ENCODE measurements at regions of chr14 and their contacts with region 1.

Region 1: DNA sequence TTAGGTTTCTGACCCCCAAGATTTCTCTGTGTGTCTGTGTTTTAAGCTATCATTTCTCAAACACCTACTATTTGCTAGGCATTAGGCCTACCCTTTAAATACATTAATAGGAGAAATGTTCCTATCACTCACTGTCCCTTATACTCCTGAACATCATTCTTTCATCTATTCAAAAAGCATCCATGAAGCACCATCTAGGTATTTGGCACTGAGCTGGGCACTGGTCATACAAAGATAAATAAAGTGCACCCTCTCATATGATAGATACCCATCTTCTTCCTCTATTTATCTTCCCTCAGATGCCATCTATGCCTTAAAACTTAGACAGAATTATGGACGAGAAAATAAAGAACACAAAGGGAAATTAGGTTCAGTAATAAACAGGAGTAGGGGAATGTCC is 20.4 kb downstream of the SIX1 start:
- DNase-seq: no peak
- H3K4me3 ChIP-seq: no peak overlapping the region
- H3K27ac ChIP-seq: no peak overlapping the region
- H3K4me1 ChIP-seq: peaks cover 14% of the 10 kb centered on the region
- H3K27me3 ChIP-seq: no peaks in the 10 kb centered on the region
- CTCF ChIP-seq: no peak

Region 2: DNA sequence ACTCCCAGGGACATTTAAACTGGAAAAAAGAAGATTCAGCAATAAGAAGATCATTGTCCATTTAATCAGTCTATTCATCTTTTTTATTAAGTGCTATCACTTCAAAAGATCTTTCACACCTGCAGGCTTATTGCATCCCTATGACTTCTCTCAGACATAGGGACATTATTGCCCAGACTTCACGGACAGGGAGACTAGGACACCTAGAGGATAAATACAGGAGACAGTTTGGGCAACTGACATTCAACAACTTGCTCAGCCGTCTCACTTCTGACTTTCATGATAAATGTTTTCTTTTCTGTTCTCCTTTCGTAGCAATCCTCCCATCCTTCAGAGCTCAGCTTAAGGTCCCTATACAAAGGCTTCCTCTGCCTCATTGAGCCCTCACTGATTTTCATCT is 567.9 kb after region 1 on chr14:
- CTCF ChIA-PET with region 1: no interaction called
- POLR2A ChIA-PET with region 1: no interaction called
- intact Hi-C with region 1: loop called (anchors 5 kb)
- DNase-seq: peak; percentile 36
- H3K4me3 ChIP-seq: no peak overlapping the region
- H3K27ac ChIP-seq: no peak overlapping the region
- H3K4me1 ChIP-seq: peaks cover 6% of the 10 kb centered on the region
- H3K27me3 ChIP-seq: no peaks in the 10 kb centered on the region
- CTCF ChIP-seq: peak; percentile 49

Measured in A673 (cell line).